ENCODE measurements at regions of chr17 and their contacts with region 1.

Region 1: DNA sequence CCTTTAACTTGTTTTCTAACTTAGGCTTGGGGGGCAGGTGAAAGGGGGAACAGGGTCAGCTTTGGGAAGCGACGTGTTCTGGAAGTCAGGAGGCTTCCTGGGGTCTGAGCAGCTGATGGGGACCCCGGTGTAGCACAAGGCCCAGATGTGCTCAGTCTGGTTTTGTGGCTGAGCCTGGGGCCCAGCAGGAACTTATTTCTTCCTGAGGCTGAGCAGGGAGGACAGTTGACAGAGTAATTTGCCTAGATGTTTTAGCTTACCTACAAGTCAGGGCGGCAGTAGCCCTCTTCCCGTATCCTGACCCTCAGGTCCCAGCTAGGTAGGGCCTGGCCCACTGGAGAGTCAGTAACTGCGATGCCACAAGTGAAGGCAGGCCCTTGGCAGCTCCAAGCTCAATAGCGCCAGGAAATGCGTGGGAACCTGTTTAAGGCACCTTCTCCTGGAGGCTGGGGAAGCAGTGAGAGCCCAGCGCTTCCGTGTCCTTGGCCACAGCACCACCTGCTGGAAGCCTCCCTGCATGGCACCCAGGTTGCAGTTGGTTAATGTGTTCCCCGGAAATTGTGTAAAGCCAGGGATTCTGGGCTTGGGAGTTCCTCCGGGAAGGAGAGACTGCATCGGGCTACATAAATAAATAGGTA is 5.2 kb downstream of the CCR7 start:
- DNase-seq: peak; percentile 90
- ATAC-seq: no peak
- H3K4me3 Mint-ChIP-seq: peak overlapping the region; percentile 94
- H3K27ac Mint-ChIP-seq: peak overlapping the region; percentile 98
- H3K4me1 Mint-ChIP-seq: peaks cover 60% of the 10 kb centered on the region
- H3K27me3 Mint-ChIP-seq: no peaks in the 10 kb centered on the region

Region 2: DNA sequence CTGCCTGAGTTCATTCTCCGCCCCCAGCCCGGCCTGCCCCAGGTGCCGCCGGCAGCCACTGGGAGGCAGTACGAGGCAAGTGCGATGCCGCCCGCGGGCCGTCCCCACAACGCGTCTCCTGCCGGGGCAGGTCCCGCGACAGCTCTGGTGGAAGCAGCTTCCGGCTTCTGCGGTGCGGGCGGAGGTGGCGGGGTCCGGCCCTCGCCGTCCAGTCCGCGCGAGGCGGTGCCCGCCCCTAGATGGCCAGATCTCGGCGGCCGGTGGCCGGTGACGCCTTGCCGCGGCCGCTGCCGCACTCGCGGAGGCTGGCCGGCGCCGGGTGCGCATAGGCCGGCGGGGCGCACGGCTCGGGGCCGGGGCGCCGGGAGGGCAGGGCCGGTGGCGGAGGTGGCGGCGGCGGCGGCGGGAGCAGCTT is 197.4 kb before region 1 on chr17:
- CTCF ChIA-PET with region 1: interaction called, 29 read pairs
- POLR2A ChIA-PET with region 1: interaction called, 4 read pairs
- intact Hi-C with region 1: loop called (anchors 1 kb)
- DNase-seq: peak; percentile 95
- ATAC-seq: peak; percentile 91
- H3K4me3 Mint-ChIP-seq: peak overlapping the region; percentile 67
- H3K27ac Mint-ChIP-seq: no peak overlapping the region
- H3K4me1 Mint-ChIP-seq: peaks cover 20% of the 10 kb centered on the region
- H3K27me3 Mint-ChIP-seq: peaks cover 10% of the 10 kb centered on the region

Region 3: GRCh38 chr17:40480501-40481003 is 79.5 kb before region 1 on chr17:
- CTCF ChIA-PET with region 1: interaction called, 7 read pairs
- POLR2A ChIA-PET with region 1: interaction called, 4 read pairs
- intact Hi-C with region 1: loop called in 1 of 2 experiments (anchors 1 kb)
- DNase-seq: peak; percentile 95
- ATAC-seq: peak; percentile 94
- H3K4me3 Mint-ChIP-seq: peak overlapping the region; percentile 60
- H3K27ac Mint-ChIP-seq: peak overlapping the region; percentile 96
- H3K4me1 Mint-ChIP-seq: peaks cover 70% of the 10 kb centered on the region
- H3K27me3 Mint-ChIP-seq: no peaks in the 10 kb centered on the region

Region 4: DNA sequence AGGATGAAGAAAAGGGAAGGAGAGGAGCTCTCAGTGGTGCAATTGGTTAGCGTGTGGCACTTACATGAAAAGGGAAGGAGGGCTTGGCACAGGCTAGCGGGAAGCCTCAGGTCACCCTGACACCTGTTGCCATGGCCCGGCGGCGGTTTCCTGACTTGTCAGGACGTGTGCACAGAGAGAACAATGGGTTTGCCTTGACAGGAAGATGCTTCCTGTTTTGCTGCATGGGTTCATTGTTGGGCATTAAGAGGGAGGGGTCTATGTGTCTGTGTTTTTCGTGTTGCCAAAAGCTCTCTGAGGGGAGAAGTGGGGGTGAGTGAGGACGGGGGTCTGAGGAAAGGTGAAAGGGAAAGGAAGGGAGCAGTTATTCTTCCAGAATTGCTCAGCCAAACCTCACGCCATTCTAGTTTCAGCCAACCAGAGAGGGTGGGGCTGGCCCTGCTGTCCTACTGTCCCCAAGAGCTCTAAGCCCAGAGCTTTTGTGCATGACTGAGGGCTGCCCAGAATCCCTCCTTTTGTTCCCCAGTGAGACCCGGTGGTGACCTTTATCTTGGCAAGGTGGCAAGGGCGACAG is 22.3 kb after region 1 on chr17:
- CTCF ChIA-PET with region 1: interaction called, 21 read pairs
- POLR2A ChIA-PET with region 1: interaction called, 42 read pairs
- intact Hi-C with region 1: loop called in 1 of 2 experiments (anchors 2 kb)
- DNase-seq: peak; percentile 82
- ATAC-seq: peak; percentile 68
- H3K4me3 Mint-ChIP-seq: peak overlapping the region; percentile 50
- H3K27ac Mint-ChIP-seq: peak overlapping the region; percentile 93
- H3K4me1 Mint-ChIP-seq: peaks cover 91% of the 10 kb centered on the region
- H3K27me3 Mint-ChIP-seq: no peaks in the 10 kb centered on the region

Region 5: DNA sequence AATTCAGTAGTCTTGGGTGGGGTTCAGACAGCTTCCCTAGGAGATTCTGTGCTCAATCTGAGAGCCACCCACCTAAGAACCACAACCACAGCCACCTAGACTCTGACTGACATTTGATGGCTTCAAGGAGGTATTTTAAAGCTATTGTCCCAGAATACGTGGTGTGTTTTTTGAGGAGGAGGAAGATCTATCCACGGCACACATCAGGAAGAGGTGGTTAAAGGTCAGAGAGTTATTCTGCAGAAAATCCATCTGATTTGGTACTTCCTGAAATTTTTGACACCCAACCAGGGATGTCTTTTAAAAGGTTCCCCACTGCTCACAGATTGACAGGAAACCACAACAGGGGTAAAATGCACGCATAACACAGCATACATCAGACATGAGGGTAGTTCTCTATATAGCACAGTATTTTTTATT is 62.4 kb after region 1 on chr17:
- CTCF ChIA-PET with region 1: interaction called, 149 read pairs
- POLR2A ChIA-PET with region 1: interaction called, 12 read pairs
- intact Hi-C with region 1: loop called in 1 of 2 experiments (anchors 1 kb)
- DNase-seq: peak; percentile 41
- ATAC-seq: peak; percentile 25
- H3K4me3 Mint-ChIP-seq: no peak overlapping the region
- H3K27ac Mint-ChIP-seq: peak overlapping the region; percentile 77
- H3K4me1 Mint-ChIP-seq: peaks cover 61% of the 10 kb centered on the region
- H3K27me3 Mint-ChIP-seq: no peaks in the 10 kb centered on the region

Region 6: DNA sequence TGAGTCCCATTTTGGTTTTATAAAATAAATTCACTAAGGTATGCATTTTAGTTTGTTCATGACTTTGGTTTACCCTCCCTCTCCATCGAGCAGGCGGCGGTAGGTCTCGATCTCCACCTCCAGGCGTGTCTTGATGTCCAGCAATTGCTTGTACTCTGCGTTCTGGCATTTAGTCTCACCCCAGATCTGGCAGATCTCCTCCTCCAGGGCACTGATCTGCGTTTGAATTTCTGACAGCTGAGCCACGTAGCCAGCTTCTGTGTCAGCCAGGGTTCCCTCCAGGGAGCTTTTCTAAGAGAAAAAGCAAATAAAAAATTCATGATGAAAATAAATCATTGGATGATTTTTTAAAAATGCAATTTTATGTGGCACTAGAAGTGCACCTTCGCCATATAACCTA is 139.3 kb after region 1 on chr17:
- CTCF ChIA-PET with region 1: no interaction called
- POLR2A ChIA-PET with region 1: no interaction called
- intact Hi-C with region 1: no loop called
- DNase-seq: no peak
- ATAC-seq: no peak
- H3K4me3 Mint-ChIP-seq: no peak overlapping the region
- H3K27ac Mint-ChIP-seq: no peak overlapping the region
- H3K4me1 Mint-ChIP-seq: no peaks in the 10 kb centered on the region
- H3K27me3 Mint-ChIP-seq: peaks cover 6% of the 10 kb centered on the region

Region 7: GRCh38 chr17:40818733-40819527 is 258.9 kb after region 1 on chr17:
- CTCF ChIA-PET with region 1: interaction called, 4 read pairs
- POLR2A ChIA-PET with region 1: interaction called, 10 read pairs
- intact Hi-C with region 1: loop called (anchors 2 kb)
- DNase-seq: peak; percentile 91
- ATAC-seq: peak; percentile 84
- H3K4me3 Mint-ChIP-seq: peak overlapping the region; percentile 95
- H3K27ac Mint-ChIP-seq: peak overlapping the region; percentile 97
- H3K4me1 Mint-ChIP-seq: peaks cover 25% of the 10 kb centered on the region
- H3K27me3 Mint-ChIP-seq: peaks cover 1% of the 10 kb centered on the region

Region 8: GRCh38 chr17:41930009-41930832 is 1370.1 kb after region 1 on chr17 and contains the start of gene ODAD4:
- CTCF ChIA-PET with region 1: no interaction called
- POLR2A ChIA-PET with region 1: interaction called, 10 read pairs
- intact Hi-C with region 1: no loop called
- DNase-seq: peak; percentile 98
- ATAC-seq: peak; percentile 99
- H3K4me3 Mint-ChIP-seq: peak within 1 kb of the TSS; percentile 96
- H3K27ac Mint-ChIP-seq: peak within 1 kb of the TSS; percentile 98
- H3K4me1 Mint-ChIP-seq: peaks cover 21% of the 10 kb centered on the region
- H3K27me3 Mint-ChIP-seq: no peaks in the 10 kb centered on the region
- total RNA-seq, gene ODAD4: 0.81 to 1.1 TPM

Measured in activated CD4-positive, alpha-beta T cell treated with anti-CD3 and anti-CD28 coated beads for 36 hours (primary cell).